GM12878 (cell line): ENCODE measurements at regions of chr1 and their contacts with region 1.

Region 1: DNA sequence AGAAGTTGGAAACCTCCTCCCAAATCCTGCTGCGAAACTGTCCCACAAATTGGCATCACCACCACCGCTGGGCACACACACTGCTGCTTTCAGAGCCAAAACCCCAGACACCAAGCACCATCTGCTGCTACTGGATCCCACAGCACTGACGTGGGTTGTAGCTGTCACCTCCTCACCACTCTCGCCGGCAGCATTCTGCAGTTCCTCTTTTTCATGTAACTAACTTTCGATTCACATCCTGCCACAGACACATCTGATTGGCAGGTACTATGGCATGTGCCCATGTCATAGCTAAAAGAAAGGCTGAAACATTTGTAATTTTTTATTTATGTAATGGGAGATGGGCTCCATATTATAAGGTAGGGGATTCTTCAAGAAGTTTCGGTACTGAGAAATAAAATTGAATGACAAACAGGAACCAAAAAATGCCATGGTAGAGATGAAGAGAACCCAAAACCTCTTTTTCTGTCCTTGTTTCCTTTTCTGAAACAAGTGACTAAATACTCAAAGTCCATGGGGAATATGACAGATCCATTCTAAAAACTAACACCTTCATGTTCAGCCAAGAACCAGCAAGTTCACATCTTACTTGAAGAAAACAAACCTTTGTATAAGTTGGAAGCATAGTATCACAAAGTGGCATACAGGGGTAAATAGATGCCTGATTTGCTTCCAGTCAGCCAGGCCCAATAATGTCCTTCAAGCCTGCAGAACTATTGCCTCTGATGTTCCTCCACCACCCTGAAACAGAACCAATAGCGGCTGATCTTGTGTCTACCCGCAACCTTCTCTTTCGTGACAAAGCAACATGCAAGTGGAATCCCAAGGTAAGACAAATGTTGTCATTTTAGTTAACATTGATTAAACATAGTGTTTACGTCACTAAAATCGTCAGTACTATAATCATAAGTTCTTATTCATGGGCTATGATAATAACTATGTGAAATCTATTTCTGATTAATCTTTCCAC is 26.6 kb upstream of the RGS13 start:
- DNase-seq: peak; percentile 96
- ATAC-seq: peak; percentile 90
- H3K4me3 ChIP-seq: peak overlapping the region; percentile 8; the same call in 1 of the 2 replicates
- H3K27ac ChIP-seq: peak overlapping the region; percentile 88
- H3K4me1 ChIP-seq: peaks cover 23% of the 10 kb centered on the region
- H3K27me3 ChIP-seq: no peaks in the 10 kb centered on the region
- CTCF ChIP-seq: peak in 2 of 3 experiments; percentile 6 to 55; a peak in 3 of 6 replicates
- EP300 ChIP-seq: peak; percentile 98 to 100
- POLR2A ChIP-seq: no peak
- RAD21 ChIP-seq: peak; percentile 60; the same call in 1 of the 2 replicates

Region 2: GRCh38 chr1:192104869-192105268 is 504.5 kb before region 1 on chr1:
- CTCF ChIA-PET with region 1: no interaction called
- POLR2A ChIA-PET with region 1: no interaction called
- RAD21 ChIA-PET with region 1: no interaction called
- SMC1A ChIA-PET with region 1: no interaction called
- in situ Hi-C with region 1: no loop called
- intact Hi-C with region 1: no loop called
- DNase-seq: no peak
- ATAC-seq: no peak
- H3K4me3 ChIP-seq: no peak overlapping the region
- H3K27ac ChIP-seq: no peak overlapping the region
- H3K4me1 ChIP-seq: no peaks in the 10 kb centered on the region
- H3K27me3 ChIP-seq: no peaks in the 10 kb centered on the region
- CTCF ChIP-seq: no peak
- EP300 ChIP-seq: no peak
- POLR2A ChIP-seq: no peak
- RAD21 ChIP-seq: no peak

Region 3: DNA sequence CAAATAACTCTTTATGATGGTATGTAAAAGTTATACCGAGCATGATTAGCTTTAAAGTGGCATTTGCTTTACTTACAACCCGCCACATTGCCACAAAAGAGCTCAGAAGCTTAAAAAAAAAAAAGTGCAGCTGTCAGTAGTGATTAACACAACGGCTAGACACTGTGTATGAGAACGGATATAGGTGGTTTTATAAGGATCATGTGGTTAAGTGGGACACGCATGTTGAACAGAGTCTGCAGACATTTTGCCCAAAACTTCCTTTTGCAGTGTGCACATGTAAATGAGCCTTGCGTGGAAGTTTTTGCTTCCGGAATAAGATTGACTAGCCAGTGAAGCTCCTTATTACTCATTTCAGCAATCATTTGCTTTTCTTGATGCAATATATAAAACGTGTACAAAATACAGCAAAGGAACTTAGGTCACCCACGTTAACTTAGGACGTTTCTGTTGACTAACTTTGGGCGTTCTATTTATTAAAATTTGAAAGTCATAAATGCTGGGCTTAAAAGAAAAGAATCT is 92.6 kb before region 1 on chr1:
- CTCF ChIA-PET with region 1: interaction called, 22 read pairs
- POLR2A ChIA-PET with region 1: interaction called, 7 read pairs
- RAD21 ChIA-PET with region 1: interaction called, 67 read pairs
- SMC1A ChIA-PET with region 1: interaction called, 63 read pairs
- in situ Hi-C with region 1: loop called (anchors 5 kb)
- intact Hi-C with region 1: loop called (anchors 1 kb)
- DNase-seq: peak; percentile 99
- ATAC-seq: peak; percentile 87
- H3K4me3 ChIP-seq: 0 out of 2 replicates have a peak overlapping the region, but pooled peaks have one; percentile 34
- H3K27ac ChIP-seq: peak overlapping the region; percentile 72
- H3K4me1 ChIP-seq: peaks cover 22% of the 10 kb centered on the region; the same call in 1 of the 2 replicates
- H3K27me3 ChIP-seq: no peaks in the 10 kb centered on the region
- CTCF ChIP-seq: no peak
- EP300 ChIP-seq: peak; percentile 99
- POLR2A ChIP-seq: no peak
- RAD21 ChIP-seq: peak; percentile 14; the same call in 1 of the 2 replicates

Region 4: GRCh38 chr1:192550922-192551534 is 58.4 kb before region 1 on chr1:
- CTCF ChIA-PET with region 1: interaction called, 16 read pairs
- POLR2A ChIA-PET with region 1: interaction called, 8 read pairs
- RAD21 ChIA-PET with region 1: interaction called, 37 read pairs
- SMC1A ChIA-PET with region 1: interaction called, 59 read pairs
- in situ Hi-C with region 1: loop called (anchors 5 kb)
- intact Hi-C with region 1: no loop called
- DNase-seq: peak; percentile 89
- ATAC-seq: peak; percentile 56
- H3K4me3 ChIP-seq: no peak overlapping the region
- H3K27ac ChIP-seq: peak overlapping the region; percentile 88
- H3K4me1 ChIP-seq: peaks cover 48% of the 10 kb centered on the region
- H3K27me3 ChIP-seq: no peaks in the 10 kb centered on the region
- CTCF ChIP-seq: no peak
- EP300 ChIP-seq: peak; percentile 71 to 85; a peak in 2 of 4 replicates
- POLR2A ChIP-seq: 0 out of 2 replicates have a peak, but pooled peaks have one; percentile 13
- RAD21 ChIP-seq: no peak

Region 5: DNA sequence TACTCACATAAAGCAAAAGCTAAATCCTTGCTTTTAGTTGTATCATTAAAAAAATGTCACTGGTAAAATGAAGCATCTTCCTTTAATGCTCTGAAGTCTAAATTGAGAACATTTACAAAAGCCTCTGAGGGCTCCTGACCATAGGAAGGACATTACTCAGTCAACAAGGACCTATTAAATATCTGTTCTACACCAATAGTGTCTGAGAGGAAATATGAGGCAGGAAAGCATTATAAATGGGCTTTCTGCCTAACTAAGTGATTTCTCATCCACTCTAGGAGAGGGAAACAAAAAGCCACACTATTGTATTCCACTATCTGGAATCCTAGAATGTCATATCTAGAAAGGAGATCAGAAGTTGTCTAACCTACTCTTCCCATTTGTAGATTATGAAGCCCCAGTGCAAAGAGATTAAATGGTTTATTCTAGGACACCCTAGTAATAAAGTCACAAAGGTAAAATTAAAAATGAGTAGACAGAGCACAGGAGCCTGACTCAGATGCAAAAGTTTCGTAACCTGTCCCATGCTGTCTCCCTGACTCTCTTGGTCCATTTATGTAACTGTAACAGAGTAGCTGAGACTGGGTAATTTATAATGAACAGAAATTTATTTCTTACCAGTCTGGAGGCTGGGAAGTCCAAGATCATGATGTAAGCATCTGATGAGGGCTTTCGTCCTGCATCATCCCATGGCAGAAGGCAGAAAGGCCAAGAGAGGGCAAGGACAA is 16.2 kb before region 1 on chr1:
- CTCF ChIA-PET with region 1: interaction called, 18 read pairs
- POLR2A ChIA-PET with region 1: no interaction called
- RAD21 ChIA-PET with region 1: interaction called, 4 read pairs
- SMC1A ChIA-PET with region 1: interaction called, 175 read pairs
- in situ Hi-C with region 1: no loop called
- intact Hi-C with region 1: no loop called
- DNase-seq: no peak
- ATAC-seq: no peak
- H3K4me3 ChIP-seq: no peak overlapping the region
- H3K27ac ChIP-seq: no peak overlapping the region
- H3K4me1 ChIP-seq: no peaks in the 10 kb centered on the region
- H3K27me3 ChIP-seq: no peaks in the 10 kb centered on the region
- CTCF ChIP-seq: no peak
- EP300 ChIP-seq: no peak
- POLR2A ChIP-seq: no peak
- RAD21 ChIP-seq: no peak

Region 6: GRCh38 chr1:192747942-192748341 is 138.5 kb after region 1 on chr1:
- CTCF ChIA-PET with region 1: no interaction called
- POLR2A ChIA-PET with region 1: no interaction called
- RAD21 ChIA-PET with region 1: no interaction called
- SMC1A ChIA-PET with region 1: no interaction called
- in situ Hi-C with region 1: no loop called
- intact Hi-C with region 1: no loop called
- DNase-seq: no peak
- ATAC-seq: no peak
- H3K4me3 ChIP-seq: no peak overlapping the region
- H3K27ac ChIP-seq: no peak overlapping the region
- H3K4me1 ChIP-seq: no peaks in the 10 kb centered on the region
- H3K27me3 ChIP-seq: no peaks in the 10 kb centered on the region; a peak in 1 of 4 replicates
- CTCF ChIP-seq: no peak
- EP300 ChIP-seq: no peak
- POLR2A ChIP-seq: no peak
- RAD21 ChIP-seq: no peak

Region 7: GRCh38 chr1:192808518-192809306 is 199.3 kb after region 1 on chr1 and contains the start of gene RGS2:
- CTCF ChIA-PET with region 1: interaction called, 13 read pairs
- POLR2A ChIA-PET with region 1: interaction called, 3 read pairs
- RAD21 ChIA-PET with region 1: interaction called, 5 read pairs
- SMC1A ChIA-PET with region 1: interaction called, 9 read pairs
- in situ Hi-C with region 1: no loop called
- intact Hi-C with region 1: loop called (anchors 5 kb)
- DNase-seq: peak; percentile 36
- ATAC-seq: peak; percentile 93
- H3K4me3 ChIP-seq: peak within 1 kb of the TSS; percentile 66
- H3K27ac ChIP-seq: no peak within 1 kb of the TSS
- H3K4me1 ChIP-seq: peaks cover 11% of the 10 kb centered on the region
- H3K27me3 ChIP-seq: peaks cover 0 to 5% of the 10 kb centered on the region in 2 experiments; a peak in 3 of 4 replicates
- CTCF ChIP-seq: no peak
- EP300 ChIP-seq: no peak
- POLR2A ChIP-seq: peak; percentile 99
- RAD21 ChIP-seq: no peak
- polyA plus RNA-seq, gene RGS2: 1.9 to 2.3 TPM

Region 8: DNA sequence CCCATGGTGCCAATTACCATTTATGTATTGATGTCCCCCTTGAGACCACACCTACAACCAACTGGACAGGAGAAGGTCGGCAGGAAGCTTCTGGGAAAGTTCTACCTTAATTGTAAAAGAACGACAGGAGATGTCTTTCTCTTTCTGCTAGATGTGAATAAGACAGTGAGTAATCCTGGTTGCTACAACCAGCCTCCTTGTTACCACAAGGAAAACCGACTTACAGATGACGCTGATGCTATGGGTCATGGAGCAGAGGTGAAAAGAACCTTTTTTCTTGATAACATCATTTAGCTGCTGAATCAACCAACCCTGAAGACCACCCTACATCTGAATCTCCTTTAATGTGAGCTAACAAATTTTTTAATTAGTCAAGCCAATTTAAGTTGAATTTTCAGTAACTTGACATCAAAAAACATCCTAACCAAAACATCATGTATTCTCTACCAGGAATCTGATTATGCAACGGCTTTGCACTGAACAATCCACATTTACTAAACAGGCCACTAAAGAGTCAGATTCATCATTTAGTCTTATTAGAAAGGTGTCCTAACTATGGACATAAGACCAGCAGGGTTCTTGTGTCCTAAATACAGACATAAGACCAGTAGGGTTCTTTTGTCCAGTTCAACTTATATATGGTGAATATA is 222.4 kb after region 1 on chr1:
- CTCF ChIA-PET with region 1: no interaction called
- POLR2A ChIA-PET with region 1: no interaction called
- RAD21 ChIA-PET with region 1: no interaction called
- SMC1A ChIA-PET with region 1: no interaction called
- in situ Hi-C with region 1: no loop called
- intact Hi-C with region 1: no loop called
- DNase-seq: no peak
- ATAC-seq: no peak
- H3K4me3 ChIP-seq: no peak overlapping the region
- H3K27ac ChIP-seq: no peak overlapping the region
- H3K4me1 ChIP-seq: no peaks in the 10 kb centered on the region
- H3K27me3 ChIP-seq: no peaks in the 10 kb centered on the region; a peak in 1 of 4 replicates
- CTCF ChIP-seq: no peak
- EP300 ChIP-seq: no peak
- POLR2A ChIP-seq: no peak
- RAD21 ChIP-seq: no peak